GM23248 (cell line): ENCODE measurements at regions of chr1 and their contacts with region 1.

Region 1: DNA sequence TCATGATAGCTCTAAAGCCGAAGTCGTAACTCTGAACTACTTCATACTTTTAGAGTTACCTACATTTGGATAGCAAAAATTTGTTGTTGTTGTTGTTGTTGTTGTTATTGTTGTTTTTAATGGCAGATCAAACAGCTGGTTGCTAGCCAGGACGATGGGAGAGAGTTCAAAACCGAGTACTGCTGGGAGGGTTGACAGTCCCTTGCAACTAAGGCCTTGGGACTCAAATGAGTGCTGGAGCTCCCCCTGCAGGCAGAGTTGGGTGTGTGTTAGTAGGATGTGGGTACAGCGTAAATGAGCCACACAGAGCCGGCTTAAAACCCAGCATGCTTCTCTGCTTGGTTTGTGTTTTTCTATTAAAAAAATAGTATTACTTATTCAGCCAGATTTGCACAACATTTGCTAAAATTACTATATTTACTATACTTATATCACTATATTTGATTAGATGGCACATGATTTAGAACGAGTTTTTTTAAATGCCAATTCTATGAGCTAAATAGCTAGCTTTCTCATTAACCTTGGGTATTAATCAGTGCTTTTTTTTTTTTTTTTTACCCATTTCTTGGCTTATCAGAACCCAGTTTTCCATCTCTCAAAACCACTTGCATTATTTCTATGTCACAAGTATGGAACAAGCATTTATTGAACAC is 129.2 kb upstream of the SYT6 start:
- DNase-seq: peak; percentile 87
- H3K4me3 ChIP-seq: no peak overlapping the region
- H3K27ac ChIP-seq: no peak overlapping the region
- H3K4me1 ChIP-seq: no peaks in the 10 kb centered on the region
- H3K27me3 ChIP-seq: no peaks in the 10 kb centered on the region; the same call in 1 of the 2 replicates

Region 2: DNA sequence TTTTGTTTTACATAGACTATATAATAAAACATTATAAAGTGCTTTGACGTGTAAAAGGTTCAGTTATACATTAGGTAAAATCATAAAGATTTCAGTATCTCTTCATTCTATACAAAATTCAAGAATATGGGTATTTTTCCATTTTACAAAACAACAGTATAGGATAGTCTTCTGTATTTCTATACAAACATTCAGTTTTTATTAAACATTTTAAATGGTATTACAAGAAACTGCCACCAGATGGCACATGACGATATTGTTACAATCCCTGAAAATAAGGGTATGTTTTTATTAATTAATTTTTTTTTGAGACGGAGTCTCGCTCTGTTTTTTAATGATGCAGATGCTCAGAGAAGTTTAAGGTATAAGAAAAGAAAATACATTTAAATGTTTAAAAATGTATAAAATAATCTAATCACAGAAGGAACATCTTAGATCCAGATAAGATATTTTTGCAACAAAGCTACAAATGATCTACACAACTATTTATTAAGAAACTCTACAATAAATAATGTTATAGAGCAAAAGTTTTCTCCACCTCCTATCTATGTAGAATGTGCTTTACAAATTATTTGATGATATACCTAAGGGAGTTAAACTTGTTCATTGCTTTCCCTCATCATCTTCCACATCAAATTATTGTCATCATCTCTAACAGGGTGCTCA is 447.1 kb before region 1 on chr1:
- in situ Hi-C with region 1: loop called (anchors 25 kb)
- DNase-seq: peak; percentile 70
- H3K4me3 ChIP-seq: no peak overlapping the region; the same call in 1 of the 2 replicates
- H3K27ac ChIP-seq: no peak overlapping the region
- H3K4me1 ChIP-seq: 0 out of 2 replicates have a peak, but pooled peaks cover under 1% of the 10 kb centered on the region
- H3K27me3 ChIP-seq: no peaks in the 10 kb centered on the region

Region 3: GRCh38 chr1:113978863-113979702 is 303.8 kb before region 1 on chr1 and contains the start of gene OLFML3:
- in situ Hi-C with region 1: loop called (anchors 25 kb)
- DNase-seq: peak; percentile 98
- H3K4me3 ChIP-seq: peak within 1 kb of the TSS; percentile 74
- H3K27ac ChIP-seq: peak within 1 kb of the TSS; percentile 93
- H3K4me1 ChIP-seq: peaks cover 84% of the 10 kb centered on the region
- H3K27me3 ChIP-seq: no peaks in the 10 kb centered on the region
- total RNA-seq, gene OLFML3: 156 and 168 TPM in 2 replicates

Region 4: DNA sequence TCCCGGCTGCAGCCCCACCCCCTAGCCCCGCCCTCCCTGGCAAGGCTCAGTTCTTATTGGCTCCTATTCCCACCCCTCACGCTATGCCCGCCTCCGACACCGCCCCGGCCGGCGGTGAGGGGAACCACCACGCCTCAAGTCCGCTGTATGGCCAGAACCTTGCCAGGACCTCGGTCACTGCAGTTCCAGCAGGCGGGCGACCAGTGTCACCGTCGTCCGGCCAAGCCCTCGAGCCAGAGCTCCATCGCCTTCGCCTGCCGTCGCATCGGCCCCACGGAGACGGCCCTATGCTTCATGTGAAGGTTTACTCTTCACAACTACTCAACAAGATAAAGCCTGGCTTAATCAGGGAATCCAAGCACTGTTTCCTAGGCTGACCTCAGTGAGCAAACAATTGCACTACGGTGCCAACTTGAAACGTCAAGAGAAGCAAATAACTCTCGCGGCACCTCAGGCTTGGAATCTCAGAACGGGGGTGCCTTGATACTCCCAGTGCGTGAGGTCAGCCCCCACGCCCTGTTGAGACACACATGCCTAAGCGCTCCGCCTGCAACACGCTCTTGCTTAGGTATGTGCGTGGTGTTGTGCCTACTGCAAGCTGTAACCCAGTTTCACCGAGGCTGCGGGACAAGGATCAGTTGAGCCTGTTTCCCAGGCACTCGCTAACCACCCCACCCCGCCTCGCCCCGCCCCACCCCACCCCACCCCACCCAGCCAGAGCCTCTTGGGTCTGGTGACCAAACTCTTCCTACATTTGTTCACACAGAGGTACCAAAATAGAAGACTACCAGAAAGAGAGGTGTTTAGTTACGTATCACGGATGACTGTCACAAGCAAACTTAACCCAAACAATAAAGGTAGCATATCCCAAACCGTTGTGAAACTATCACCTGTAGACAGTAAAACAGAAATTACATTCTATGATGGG is 387.5 kb after region 1 on chr1:
- in situ Hi-C with region 1: no loop called
- DNase-seq: peak; percentile 99
- H3K4me3 ChIP-seq: peak overlapping the region; percentile 88
- H3K27ac ChIP-seq: peak overlapping the region; percentile 98
- H3K4me1 ChIP-seq: peaks cover 15% of the 10 kb centered on the region; the same call in 1 of the 2 replicates
- H3K27me3 ChIP-seq: no peaks in the 10 kb centered on the region